ENCODE measurements at regions of chr19 and their contacts with region 1.

Region 1: DNA sequence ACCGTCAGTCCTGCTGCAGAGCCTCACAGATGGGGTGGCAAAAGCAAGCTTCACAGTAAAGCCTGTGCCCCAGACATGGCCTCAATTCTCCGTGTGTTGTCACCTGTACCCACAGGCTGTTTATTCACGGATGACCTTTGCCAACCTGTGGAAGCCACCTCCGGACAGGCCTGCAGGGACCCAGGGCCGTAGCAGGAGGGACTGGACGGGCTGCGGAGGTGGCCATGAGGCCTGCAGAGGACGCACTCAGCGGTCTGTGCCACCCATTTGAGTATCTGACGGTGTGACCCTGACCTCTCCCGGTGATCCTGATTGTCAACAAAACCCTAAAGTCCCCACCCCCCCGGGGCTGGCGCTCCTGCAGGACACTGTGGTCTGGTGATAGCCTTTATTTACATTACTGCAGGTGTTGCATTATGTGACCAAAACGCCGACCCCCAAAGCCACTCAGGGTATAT is 7.8 kb upstream of the KLF16 start:
- DNase-seq: peak in 1 of 6 donors; percentile 54
- ATAC-seq: no peak
- H3K4me3 ChIP-seq: no peak overlapping the region
- H3K27ac ChIP-seq: no peak overlapping the region
- H3K4me1 ChIP-seq: peaks cover 19 to 26% (median 22%) of the 10 kb centered on the region in 3 donors
- H3K27me3 ChIP-seq: no peaks in the 10 kb centered on the region
- CTCF ChIP-seq: no peak

Region 2: DNA sequence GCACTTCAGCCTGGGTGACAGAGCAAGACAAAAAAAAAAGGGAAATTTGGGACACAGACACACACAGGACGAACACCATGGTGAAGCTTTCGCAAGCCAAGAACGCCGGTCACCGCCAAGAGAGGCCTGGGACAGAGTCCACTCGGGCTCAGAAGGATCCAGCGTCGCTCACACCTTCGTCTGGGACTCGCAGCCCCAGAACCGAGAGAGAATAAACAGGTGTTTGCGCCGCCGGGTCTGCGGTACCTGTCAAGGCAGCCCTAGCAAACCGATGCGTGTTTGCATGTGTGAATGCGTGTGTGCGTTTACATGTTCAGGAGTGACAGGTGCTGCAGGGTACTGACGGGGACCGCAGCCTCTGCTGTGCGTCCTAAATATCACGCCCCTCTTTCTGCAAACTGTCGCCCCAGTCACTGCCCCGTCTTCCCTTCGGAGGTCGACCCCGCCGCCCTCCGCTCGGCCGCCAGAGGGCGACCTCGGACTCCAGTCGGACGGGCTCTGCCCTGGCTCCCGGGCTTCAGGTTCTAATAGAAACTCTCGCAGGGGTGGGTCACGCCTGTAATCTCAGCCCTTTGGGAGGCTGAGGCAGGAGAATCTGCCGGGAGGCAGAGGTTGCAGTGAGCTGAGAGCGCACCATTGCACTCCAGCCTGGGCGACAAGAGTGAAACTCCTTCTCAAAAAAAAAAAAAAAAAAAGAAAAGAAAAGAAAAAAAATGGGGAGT is 58.0 kb after region 1 on chr19:
- intact Hi-C with region 1: loop called in 1 of 3 experiments (anchors 2 kb)
- DNase-seq: peak; percentile 61 to 95 (median 82)
- ATAC-seq: peak; percentile 94 to 98 (median 96)
- H3K4me3 ChIP-seq: peak overlapping the region in 2 of 4 donors; percentile 28 to 46
- H3K27ac ChIP-seq: no peak overlapping the region
- H3K4me1 ChIP-seq: peaks cover 0 to 4% (median 0%) of the 10 kb centered on the region in 3 donors
- H3K27me3 ChIP-seq: no peaks in the 10 kb centered on the region
- CTCF ChIP-seq: peak; percentile 86 to 93 (median 88)

Measured in pancreas (tissue), 10 donors.